AG04450 (cell line): ENCODE measurements at regions of chr10 and their contacts with region 1.

Region 1: GRCh38 chr10:3852147-3852904 is 67.3 kb upstream of the KLF6 start:
- DNase-seq: peak; percentile 95
- H3K4me3 ChIP-seq: no peak overlapping the region
- H3K27ac ChIP-seq: peak overlapping the region; percentile 88
- H3K27me3 ChIP-seq: no peaks in the 10 kb centered on the region
- CTCF ChIP-seq: no peak

Region 2: DNA sequence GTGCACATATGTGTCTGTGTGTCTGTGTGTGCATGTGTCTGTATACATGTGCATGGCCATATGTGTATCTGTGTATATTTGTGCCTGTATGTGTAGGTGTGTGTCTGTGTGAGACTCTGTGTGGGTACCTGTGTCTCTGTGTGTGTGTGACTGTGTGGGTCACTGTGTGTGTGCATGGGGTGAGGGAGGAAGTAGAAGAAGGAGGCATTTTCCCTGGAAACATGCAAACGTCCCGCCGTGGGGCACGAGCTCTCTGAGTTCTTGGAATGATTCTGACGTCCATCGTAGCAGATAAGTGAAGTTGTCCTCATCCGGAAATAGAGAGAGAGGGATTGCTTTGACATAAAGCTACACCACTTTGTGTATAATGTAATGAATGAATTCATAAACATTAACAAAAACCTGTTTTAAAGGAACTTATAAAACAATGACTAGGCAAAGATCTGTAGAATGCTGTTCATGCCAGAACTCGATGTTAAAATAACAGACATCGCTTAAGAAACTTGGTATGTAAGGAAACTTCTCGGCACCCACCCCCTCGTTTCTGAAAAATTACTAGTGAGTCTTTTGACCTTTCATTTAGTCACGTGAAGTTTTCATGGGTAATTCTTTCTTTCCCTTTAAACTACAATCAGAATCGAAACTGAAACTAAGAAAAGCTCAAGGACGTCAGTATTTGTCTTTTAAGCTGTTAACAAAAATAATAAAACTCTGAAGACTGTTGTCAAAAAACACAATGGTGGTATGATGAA is 23.7 kb before region 1 on chr10:
- CTCF ChIA-PET with region 1: no interaction called
- POLR2A ChIA-PET with region 1: interaction called, 12 read pairs
- DNase-seq: peak; percentile 61
- H3K4me3 ChIP-seq: peak overlapping the region; percentile 41
- H3K27ac ChIP-seq: peak overlapping the region; percentile 73
- H3K27me3 ChIP-seq: no peaks in the 10 kb centered on the region
- CTCF ChIP-seq: no peak

Region 3: GRCh38 chr10:3873728-3874461 is 21.6 kb after region 1 on chr10:
- CTCF ChIA-PET with region 1: no interaction called
- POLR2A ChIA-PET with region 1: no interaction called
- DNase-seq: no peak
- H3K4me3 ChIP-seq: no peak overlapping the region
- H3K27ac ChIP-seq: no peak overlapping the region
- H3K27me3 ChIP-seq: no peaks in the 10 kb centered on the region
- CTCF ChIP-seq: no peak

Region 4: DNA sequence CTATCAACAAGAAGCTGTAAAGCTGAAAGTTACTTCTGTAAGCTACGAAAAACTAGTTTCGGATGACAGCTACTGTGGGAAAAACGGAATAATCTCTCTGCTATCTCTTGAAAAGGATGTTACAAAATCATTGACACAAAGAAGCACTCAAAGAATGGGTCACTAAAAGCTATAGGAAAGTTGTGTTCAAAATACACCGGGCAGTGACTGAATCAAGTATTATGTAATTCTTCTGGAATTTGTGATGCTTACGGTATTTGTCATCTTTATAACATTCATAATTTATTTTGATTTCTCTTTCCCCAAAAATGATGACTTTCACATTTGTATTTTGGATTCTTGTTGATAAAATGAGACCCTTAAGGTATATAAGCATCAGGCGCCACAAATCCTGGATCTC is 44.8 kb after region 1 on chr10:
- CTCF ChIA-PET with region 1: no interaction called
- POLR2A ChIA-PET with region 1: interaction called, 10 read pairs
- DNase-seq: no peak
- H3K4me3 ChIP-seq: no peak overlapping the region
- H3K27ac ChIP-seq: no peak overlapping the region
- H3K27me3 ChIP-seq: no peaks in the 10 kb centered on the region
- CTCF ChIP-seq: no peak

Region 5: DNA sequence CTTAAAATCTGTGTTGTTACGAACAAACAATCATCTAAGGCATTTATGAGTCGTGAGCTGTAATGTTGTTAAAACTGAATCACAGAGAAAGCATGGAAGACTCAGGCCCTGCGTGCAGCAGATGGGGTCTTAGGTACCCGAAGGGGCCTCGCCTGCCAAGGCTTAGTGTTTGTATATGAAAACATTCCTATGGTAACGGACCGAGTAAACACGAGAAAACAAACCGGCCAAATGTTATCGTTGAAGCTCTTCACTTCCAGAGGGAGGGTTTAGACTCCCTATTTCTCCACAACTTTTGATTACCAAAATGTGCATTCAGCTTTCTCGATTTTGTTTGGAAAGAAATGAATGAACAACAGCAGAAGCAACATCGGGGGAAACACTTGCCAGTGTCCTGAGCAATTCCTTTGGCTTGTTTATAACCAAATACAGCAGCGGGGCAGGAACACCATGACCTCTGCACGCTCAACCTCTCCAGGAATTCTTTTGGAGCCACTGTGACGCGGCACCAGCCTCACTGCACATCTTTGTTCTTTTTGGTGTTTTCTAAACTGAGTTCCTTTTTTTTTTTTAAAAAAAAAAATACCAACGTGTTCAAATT is 54.3 kb after region 1 on chr10:
- CTCF ChIA-PET with region 1: no interaction called
- POLR2A ChIA-PET with region 1: interaction called, 14 read pairs
- DNase-seq: peak; percentile 82
- H3K4me3 ChIP-seq: no peak overlapping the region; the same call in 1 of the 2 replicates
- H3K27ac ChIP-seq: peak overlapping the region; percentile 72
- H3K27me3 ChIP-seq: no peaks in the 10 kb centered on the region
- CTCF ChIP-seq: no peak